Caco-2 (cell line): ENCODE measurements at regions of chr10 and their contacts with region 1.

Region 1: DNA sequence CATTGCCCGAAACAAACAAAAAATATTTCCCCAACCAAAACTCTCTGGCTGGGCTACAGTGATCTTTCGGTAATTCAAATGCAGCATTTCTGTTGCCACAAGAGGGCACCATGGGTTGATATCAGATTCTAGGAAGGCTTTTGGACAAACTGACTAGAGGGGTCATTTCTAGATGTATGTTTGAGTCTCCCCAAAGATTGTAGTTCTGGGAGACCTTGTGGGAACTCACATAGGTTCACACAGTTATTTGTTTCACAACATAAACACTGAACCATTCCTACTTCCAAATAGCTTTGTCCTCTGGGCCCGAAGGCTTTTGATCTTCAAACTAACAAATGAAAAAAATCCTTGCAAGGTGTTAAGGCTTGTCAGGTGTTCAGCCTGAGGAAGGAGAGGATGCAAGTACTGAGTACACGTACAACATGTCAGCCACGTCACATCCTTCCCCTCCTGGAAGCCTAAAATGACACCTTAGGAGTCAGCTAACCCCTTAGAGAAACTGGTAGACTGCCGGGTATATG is 37.0 kb upstream of the IL15RA start:
- DNase-seq: peak in 1 of 2 experiments; percentile 67
- H3K4me3 ChIP-seq: no peak overlapping the region
- H3K4me3 Mint-ChIP-seq: no peak overlapping the region
- H3K27ac Mint-ChIP-seq: no peak overlapping the region
- H3K4me1 ChIP-seq: no peaks in the 10 kb centered on the region
- H3K4me1 Mint-ChIP-seq: no peaks in the 10 kb centered on the region
- H3K27me3 ChIP-seq: no peaks in the 10 kb centered on the region; the same call in 1 of the 2 replicates
- H3K27me3 Mint-ChIP-seq: peaks cover 9% of the 10 kb centered on the region
- CTCF ChIP-seq: peak; percentile 82 to 85

Region 2: DNA sequence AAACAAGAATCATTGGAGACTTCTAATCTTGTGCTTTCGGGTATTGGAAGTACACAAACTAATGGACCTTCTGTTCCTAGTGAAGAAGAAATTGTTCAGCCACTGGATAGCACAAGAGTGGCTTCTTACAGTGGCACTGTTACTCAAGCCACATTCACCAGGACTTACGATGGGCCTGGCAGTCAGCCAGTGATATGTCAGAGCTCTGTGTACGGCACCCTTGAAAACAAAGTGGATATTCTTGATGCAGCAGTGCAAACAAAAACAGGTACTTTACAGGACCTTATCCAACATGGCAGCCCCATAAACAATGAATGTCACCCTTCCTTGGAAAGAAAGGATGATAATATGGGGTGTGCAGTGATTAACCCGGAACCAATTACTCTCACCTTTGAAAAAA is 268.1 kb before region 1 on chr10:
- CTCF ChIA-PET with region 1: no interaction called
- POLR2A ChIA-PET with region 1: no interaction called
- intact Hi-C with region 1: no loop called
- DNase-seq: no peak
- H3K4me3 ChIP-seq: no peak overlapping the region
- H3K4me3 Mint-ChIP-seq: no peak overlapping the region
- H3K27ac Mint-ChIP-seq: no peak overlapping the region
- H3K4me1 ChIP-seq: no peaks in the 10 kb centered on the region
- H3K4me1 Mint-ChIP-seq: no peaks in the 10 kb centered on the region
- H3K27me3 ChIP-seq: no peaks in the 10 kb centered on the region
- H3K27me3 Mint-ChIP-seq: no peaks in the 10 kb centered on the region
- CTCF ChIP-seq: no peak

Region 3: DNA sequence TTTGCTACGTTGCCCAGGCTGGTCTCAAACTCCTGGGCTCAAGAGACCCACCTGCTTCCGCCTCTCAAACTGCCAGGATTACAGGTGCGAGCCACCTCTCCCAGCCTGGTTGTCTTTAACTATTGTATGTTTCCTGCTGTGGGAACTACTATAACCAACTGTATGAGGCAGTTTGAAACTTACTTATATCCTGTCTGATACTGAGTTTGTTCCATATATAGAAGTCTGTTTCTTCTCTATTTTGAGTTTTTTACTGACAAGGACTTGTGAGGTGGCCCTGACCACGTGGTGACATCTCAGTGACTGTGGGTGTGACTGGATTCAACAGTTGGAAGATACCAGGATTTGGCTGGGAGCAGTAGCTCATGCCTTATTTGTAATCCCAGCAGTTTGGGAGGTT is 110.1 kb before region 1 on chr10:
- CTCF ChIA-PET with region 1: no interaction called
- POLR2A ChIA-PET with region 1: no interaction called
- intact Hi-C with region 1: no loop called
- DNase-seq: no peak
- H3K4me3 ChIP-seq: no peak overlapping the region
- H3K4me3 Mint-ChIP-seq: no peak overlapping the region
- H3K27ac Mint-ChIP-seq: no peak overlapping the region
- H3K4me1 ChIP-seq: no peaks in the 10 kb centered on the region
- H3K4me1 Mint-ChIP-seq: no peaks in the 10 kb centered on the region
- H3K27me3 ChIP-seq: no peaks in the 10 kb centered on the region
- H3K27me3 Mint-ChIP-seq: no peaks in the 10 kb centered on the region
- CTCF ChIP-seq: no peak

Region 4: DNA sequence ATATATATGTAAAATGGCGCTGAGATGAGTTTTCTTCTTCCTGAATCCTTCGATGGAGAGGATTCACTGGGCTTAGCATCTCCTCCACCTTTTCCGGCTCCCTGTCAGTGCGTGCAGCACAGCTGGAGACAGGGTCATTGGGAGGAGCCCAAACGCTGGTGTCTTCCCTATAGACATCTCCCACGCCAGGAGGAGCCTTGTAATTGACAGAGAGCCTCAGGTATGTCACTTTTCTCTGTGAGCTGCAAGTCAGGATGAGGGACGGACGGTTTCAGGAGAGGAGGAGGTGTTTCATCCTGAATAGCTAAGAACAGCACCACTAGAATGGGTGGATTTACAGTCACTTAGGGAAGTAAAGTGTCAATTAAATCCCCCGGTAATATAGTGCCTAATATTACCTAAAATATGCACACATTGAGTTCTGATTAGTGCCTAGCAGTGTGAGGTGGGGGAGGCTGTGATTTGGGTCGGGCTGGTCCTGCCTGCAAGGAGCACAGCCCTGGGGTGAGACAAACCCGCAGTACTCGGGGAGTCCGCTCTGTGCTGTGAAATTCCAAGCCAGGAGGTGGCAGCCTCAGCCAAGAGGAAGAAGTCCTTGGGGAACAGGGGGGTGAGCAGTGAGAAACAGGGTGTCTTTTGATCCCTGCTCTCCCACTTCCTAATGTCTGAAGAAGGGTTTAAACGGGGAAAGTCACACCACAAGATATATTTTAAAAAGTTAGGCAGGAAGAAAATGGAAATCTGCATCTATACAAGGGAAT is 65.1 kb before region 1 on chr10:
- CTCF ChIA-PET with region 1: no interaction called
- POLR2A ChIA-PET with region 1: no interaction called
- intact Hi-C with region 1: loop called (anchors 1 kb)
- DNase-seq: peak; percentile 74 to 75
- H3K4me3 ChIP-seq: no peak overlapping the region
- H3K4me3 Mint-ChIP-seq: no peak overlapping the region
- H3K27ac Mint-ChIP-seq: no peak overlapping the region
- H3K4me1 ChIP-seq: peaks cover 3% of the 10 kb centered on the region; the same call in 1 of the 2 replicates
- H3K4me1 Mint-ChIP-seq: peaks cover 11% of the 10 kb centered on the region
- H3K27me3 ChIP-seq: no peaks in the 10 kb centered on the region
- H3K27me3 Mint-ChIP-seq: no peaks in the 10 kb centered on the region
- CTCF ChIP-seq: peak; percentile 41 to 82

Region 5: GRCh38 chr10:6002809-6003510 is 11.3 kb before region 1 on chr10:
- CTCF ChIA-PET with region 1: no interaction called
- POLR2A ChIA-PET with region 1: no interaction called
- intact Hi-C with region 1: no loop called
- DNase-seq: no peak
- H3K4me3 ChIP-seq: no peak overlapping the region
- H3K4me3 Mint-ChIP-seq: no peak overlapping the region
- H3K27ac Mint-ChIP-seq: no peak overlapping the region
- H3K4me1 ChIP-seq: no peaks in the 10 kb centered on the region
- H3K4me1 Mint-ChIP-seq: no peaks in the 10 kb centered on the region
- H3K27me3 ChIP-seq: no peaks in the 10 kb centered on the region
- H3K27me3 Mint-ChIP-seq: peaks cover 41% of the 10 kb centered on the region
- CTCF ChIP-seq: no peak

Region 6: GRCh38 chr10:6050801-6051445 is 36.6 kb after region 1 on chr10:
- CTCF ChIA-PET with region 1: no interaction called
- POLR2A ChIA-PET with region 1: no interaction called
- intact Hi-C with region 1: loop called (anchors 1 kb)
- DNase-seq: peak; percentile 64 to 68
- H3K4me3 ChIP-seq: no peak overlapping the region
- H3K4me3 Mint-ChIP-seq: peak overlapping the region; percentile 59
- H3K27ac Mint-ChIP-seq: no peak overlapping the region
- H3K4me1 ChIP-seq: no peaks in the 10 kb centered on the region
- H3K4me1 Mint-ChIP-seq: peaks cover 7% of the 10 kb centered on the region
- H3K27me3 ChIP-seq: 0 out of 2 replicates have a peak, but pooled peaks cover 1% of the 10 kb centered on the region
- H3K27me3 Mint-ChIP-seq: peaks cover 30% of the 10 kb centered on the region
- CTCF ChIP-seq: peak in 1 of 2 experiments; percentile 56

Region 7: DNA sequence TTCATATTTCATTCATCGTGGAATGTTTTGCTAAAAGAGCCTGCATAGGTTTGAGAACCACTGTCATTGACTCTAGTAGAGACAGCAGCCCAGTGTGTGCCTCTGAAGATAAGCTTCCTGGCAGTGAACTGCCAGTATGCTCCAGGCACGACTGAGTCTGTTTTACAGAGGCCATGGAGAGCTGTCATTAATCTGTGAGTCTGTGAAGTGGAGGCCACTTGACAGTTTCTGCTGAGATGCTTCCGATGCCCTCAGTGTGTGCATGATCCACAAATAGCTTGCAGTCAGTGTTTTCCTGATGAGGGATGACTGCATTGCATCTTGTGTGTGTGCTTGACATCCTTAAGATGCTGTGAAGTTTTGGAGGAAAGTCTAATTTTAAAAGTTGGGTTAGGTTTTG is 350.6 kb after region 1 on chr10:
- CTCF ChIA-PET with region 1: no interaction called
- POLR2A ChIA-PET with region 1: no interaction called
- intact Hi-C with region 1: no loop called
- DNase-seq: no peak
- H3K4me3 ChIP-seq: no peak overlapping the region
- H3K4me3 Mint-ChIP-seq: no peak overlapping the region
- H3K27ac Mint-ChIP-seq: peak overlapping the region; percentile 87
- H3K4me1 ChIP-seq: peaks cover 36% of the 10 kb centered on the region
- H3K4me1 Mint-ChIP-seq: peaks cover 29% of the 10 kb centered on the region
- H3K27me3 ChIP-seq: no peaks in the 10 kb centered on the region
- H3K27me3 Mint-ChIP-seq: no peaks in the 10 kb centered on the region
- CTCF ChIP-seq: no peak